Activated CD4-positive, alpha-beta T cell treated with anti-CD3 and anti-CD28 coated beads for 36 hours (primary cell): ENCODE measurements at regions of chr3 and their contacts with region 1.

Region 1: GRCh38 chr3:127672516-127673190 is at the start of gene ABTB1:
- DNase-seq: peak; percentile 94
- ATAC-seq: peak; percentile 90
- H3K4me3 Mint-ChIP-seq: peak within 1 kb of the TSS; percentile 88
- H3K27ac Mint-ChIP-seq: peak within 1 kb of the TSS; percentile 96
- H3K4me1 Mint-ChIP-seq: peaks cover 22% of the 10 kb centered on the region
- H3K27me3 Mint-ChIP-seq: no peaks in the 10 kb centered on the region
- total RNA-seq, gene ABTB1: 8.3 to 9.6 TPM

Region 2: DNA sequence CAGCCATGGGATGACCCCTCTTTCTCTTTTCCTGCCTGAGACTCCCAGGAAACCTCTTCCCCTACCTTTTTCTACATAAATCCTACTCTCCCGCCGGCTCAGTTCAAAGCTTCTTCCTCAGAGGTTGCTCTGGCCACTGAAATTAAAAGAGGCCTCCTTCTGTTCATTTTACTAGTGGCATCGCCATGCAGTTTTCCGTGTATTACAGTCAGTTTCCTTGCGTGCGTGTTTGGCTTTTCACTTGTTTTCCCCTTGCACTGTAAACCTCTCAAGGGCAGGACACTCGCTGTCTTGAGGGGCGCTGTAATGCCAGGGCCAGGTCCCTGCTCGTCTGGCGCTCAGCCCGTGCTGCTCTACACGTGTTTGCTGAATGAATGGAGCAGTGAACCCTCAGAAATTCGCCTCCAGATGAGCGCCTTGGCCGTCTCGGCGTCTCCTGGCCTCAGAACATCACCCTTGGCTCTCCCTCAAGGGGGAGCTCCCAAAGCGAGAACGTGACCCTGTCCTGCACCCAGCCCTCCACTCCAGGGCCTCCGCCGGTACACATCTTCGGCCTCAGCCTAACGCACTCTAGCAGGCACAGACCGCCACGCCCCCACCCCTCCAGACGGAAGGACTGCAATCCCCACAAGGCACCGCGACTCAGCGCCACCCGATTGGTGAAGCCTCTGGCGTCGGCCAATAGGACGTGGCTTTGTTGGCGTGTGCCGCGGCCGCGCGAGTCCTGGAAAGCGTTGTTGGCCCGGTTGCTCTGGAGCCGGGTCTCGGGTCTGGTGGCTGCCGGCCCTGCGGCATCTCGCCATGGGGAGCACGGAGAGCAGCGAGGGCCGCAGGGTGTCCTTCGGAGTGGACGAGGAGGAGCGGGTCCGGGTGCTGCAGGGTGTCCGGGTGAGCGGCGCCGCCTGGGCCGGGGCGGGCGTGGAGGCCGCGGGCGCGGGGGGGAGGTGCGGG is 968.9 kb before region 1 on chr3 and contains the start of gene CHCHD6:
- CTCF ChIA-PET with region 1: no interaction called
- POLR2A ChIA-PET with region 1: no interaction called
- intact Hi-C with region 1: loop called in 1 of 2 experiments (anchors 1 kb)
- DNase-seq: peak; percentile 98
- ATAC-seq: peak; percentile 99
- H3K4me3 Mint-ChIP-seq: peak within 1 kb of the TSS; percentile 92
- H3K27ac Mint-ChIP-seq: peak within 1 kb of the TSS; percentile 82
- H3K4me1 Mint-ChIP-seq: peaks cover 23% of the 10 kb centered on the region
- H3K27me3 Mint-ChIP-seq: peaks cover 9% of the 10 kb centered on the region
- total RNA-seq, gene CHCHD6: 17.1 to 17.7 TPM

Region 3: GRCh38 chr3:127598841-127599570 is 73.6 kb before region 1 on chr3:
- CTCF ChIA-PET with region 1: interaction called, 3 read pairs
- POLR2A ChIA-PET with region 1: no interaction called
- intact Hi-C with region 1: loop called (anchors 1 kb)
- DNase-seq: no peak
- ATAC-seq: no peak
- H3K4me3 Mint-ChIP-seq: peak overlapping the region; percentile 80
- H3K27ac Mint-ChIP-seq: peak overlapping the region; percentile 96
- H3K4me1 Mint-ChIP-seq: peaks cover 41% of the 10 kb centered on the region
- H3K27me3 Mint-ChIP-seq: no peaks in the 10 kb centered on the region

Region 4: GRCh38 chr3:127697551-127698240 is 25.0 kb after region 1 on chr3:
- CTCF ChIA-PET with region 1: no interaction called
- POLR2A ChIA-PET with region 1: no interaction called
- intact Hi-C with region 1: loop called in 1 of 2 experiments (anchors 1 kb)
- DNase-seq: peak; percentile 75
- ATAC-seq: peak; percentile 92
- H3K4me3 Mint-ChIP-seq: no peak overlapping the region
- H3K27ac Mint-ChIP-seq: no peak overlapping the region
- H3K4me1 Mint-ChIP-seq: peaks cover 3% of the 10 kb centered on the region
- H3K27me3 Mint-ChIP-seq: no peaks in the 10 kb centered on the region

Region 5: DNA sequence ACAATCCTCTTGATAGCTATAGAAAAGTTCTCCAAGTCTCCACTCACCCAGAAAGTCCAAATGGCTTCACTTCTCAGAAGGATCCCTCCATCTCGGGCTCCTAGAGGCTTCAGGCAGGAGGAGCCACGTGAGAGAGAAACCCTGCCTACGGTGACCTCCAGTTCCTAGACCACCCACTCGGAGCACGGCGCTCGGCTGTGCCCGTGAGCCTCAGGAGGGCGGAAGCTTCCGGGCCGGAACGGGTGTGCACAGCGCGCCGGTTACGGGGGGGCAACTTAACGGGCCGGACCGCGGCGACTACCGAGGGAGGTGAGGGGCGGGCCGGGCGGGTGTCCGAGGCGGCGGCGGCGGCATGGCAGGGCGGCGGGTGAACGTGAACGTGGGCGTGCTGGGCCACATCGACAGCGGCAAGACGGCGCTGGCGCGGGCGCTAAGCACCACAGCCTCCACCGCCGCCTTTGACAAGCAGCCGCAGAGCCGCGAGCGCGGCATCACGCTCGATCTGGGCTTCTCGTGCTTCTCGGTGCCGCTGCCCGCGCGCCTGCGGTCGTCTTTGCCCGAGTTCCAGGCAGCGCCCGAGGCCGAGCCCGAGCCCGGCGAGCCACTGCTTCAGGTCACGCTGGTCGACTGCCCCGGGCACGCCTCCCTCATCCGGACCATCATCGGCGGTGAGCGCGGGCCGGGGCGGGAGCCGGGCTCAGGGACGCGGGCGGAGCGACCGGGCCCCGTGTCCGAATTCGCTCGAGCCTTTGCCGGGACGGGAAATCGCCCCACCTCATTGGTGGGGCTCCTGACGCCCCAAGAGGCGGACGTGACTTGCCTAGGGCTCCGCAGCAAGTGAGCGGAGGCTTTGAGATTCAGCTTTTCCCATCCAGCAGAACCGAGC is 480.7 kb after region 1 on chr3 and contains the start of gene EEFSEC:
- CTCF ChIA-PET with region 1: no interaction called
- POLR2A ChIA-PET with region 1: no interaction called
- intact Hi-C with region 1: loop called in 1 of 2 experiments (anchors 1 kb)
- DNase-seq: peak; percentile 91
- ATAC-seq: peak; percentile 95
- H3K4me3 Mint-ChIP-seq: peak within 1 kb of the TSS; percentile 80
- H3K27ac Mint-ChIP-seq: peak within 1 kb of the TSS; percentile 85
- H3K4me1 Mint-ChIP-seq: peaks cover 25% of the 10 kb centered on the region
- H3K27me3 Mint-ChIP-seq: no peaks in the 10 kb centered on the region
- total RNA-seq, gene EEFSEC: 19.6 to 20.7 TPM